Activated B cell treated with CpG ODN at 0.5 μM for 24 hours (primary cell): ENCODE measurements at regions of chr16 and their contacts with region 1.

Region 1: DNA sequence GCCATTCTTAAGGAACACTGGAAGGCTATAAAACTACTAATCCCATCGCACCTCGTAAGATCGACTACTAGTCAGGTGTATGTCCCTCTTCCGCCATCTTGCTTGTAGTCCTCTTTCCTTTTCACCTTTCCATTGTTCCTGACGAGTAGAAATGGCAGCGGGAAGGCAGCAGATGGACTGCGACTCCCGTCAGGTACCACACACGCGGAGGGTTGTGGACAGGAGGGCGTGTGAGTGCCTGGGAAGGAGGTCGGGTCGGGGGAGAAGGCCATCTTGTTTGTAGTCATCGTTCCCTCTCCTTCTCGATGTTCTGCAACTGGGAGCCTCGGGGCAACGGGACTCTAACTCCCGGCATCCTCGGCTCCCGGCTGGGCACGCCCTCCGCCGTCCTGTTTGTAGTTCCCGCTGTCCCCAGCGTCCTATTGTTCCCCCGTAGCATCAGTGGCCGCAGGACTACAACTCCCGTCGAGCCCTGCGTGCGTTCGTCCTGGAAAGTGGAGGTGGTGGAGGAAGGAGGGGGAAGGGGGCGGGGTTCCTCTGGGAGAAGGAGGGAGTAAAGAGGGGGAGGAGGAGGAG is 324 bp upstream of the FBXL19 start:
- DNase-seq: peak; percentile 86
- ATAC-seq: peak; percentile 68
- H3K4me3 Mint-ChIP-seq: peak overlapping the region; percentile 100
- H3K27ac Mint-ChIP-seq: peak overlapping the region; percentile 100
- H3K4me1 Mint-ChIP-seq: peaks cover 20% of the 10 kb centered on the region
- H3K27me3 Mint-ChIP-seq: no peaks in the 10 kb centered on the region
- CTCF ChIP-seq: no peak

Region 2: DNA sequence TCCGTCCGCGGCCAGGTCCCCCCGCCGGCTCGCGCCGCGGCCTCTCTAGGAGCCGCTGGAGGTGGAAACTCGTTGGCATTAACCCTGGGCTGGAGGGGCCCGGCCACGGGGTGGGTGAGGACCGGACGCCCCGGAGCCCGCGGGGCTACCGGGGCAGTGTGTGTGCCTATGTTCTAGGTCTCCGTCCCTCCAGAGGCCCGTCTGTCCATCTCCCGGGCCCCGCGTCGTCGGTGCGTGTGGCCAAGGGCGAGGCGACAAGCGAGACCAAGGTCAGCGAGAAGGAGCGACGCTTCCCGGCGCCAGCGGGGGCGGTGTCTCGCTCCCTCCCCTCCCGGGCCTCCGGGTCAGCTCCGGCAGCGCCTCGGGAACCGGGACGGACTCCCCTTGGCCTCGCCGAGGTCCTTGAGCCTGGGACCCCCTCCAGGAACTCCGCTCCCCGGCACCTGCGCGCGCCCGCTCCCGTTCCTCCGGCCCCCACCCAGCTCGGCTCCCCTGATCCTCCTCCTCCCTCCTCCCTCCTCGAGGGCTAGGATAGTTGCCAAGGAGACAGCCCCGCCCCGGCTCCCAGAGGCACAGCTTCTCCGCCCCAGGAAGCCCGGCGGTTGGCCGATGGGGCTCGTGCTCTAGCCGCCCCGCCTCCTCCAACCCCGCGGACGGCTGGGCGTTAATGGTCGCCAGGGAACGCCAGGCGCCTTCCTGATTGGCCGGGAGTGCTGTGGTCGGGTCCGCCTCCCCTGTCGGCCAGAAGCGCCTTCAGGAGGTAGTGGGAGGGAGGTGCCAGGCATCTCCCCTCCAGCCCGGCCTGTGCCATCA is 396.0 kb before region 1 on chr16:
- CTCF ChIA-PET with region 1: no interaction called
- POLR2A ChIA-PET with region 1: no interaction called
- intact Hi-C with region 1: loop called (anchors 5 kb)
- DNase-seq: peak; percentile 93
- ATAC-seq: peak; percentile 84
- H3K4me3 Mint-ChIP-seq: peak overlapping the region; percentile 89
- H3K27ac Mint-ChIP-seq: peak overlapping the region; percentile 99
- H3K4me1 Mint-ChIP-seq: peaks cover 21% of the 10 kb centered on the region
- H3K27me3 Mint-ChIP-seq: no peaks in the 10 kb centered on the region
- CTCF ChIP-seq: no peak

Region 3: GRCh38 chr16:30657866-30658730 is 264.9 kb before region 1 on chr16 and contains the start of gene FBRS:
- CTCF ChIA-PET with region 1: no interaction called
- POLR2A ChIA-PET with region 1: interaction called, 5 read pairs
- intact Hi-C with region 1: loop called (anchors 1 kb)
- DNase-seq: peak; percentile 99
- ATAC-seq: peak; percentile 73
- H3K4me3 Mint-ChIP-seq: peak within 1 kb of the TSS; percentile 98
- H3K27ac Mint-ChIP-seq: peak within 1 kb of the TSS; percentile 100
- H3K4me1 Mint-ChIP-seq: peaks cover 37% of the 10 kb centered on the region
- H3K27me3 Mint-ChIP-seq: no peaks in the 10 kb centered on the region
- CTCF ChIP-seq: no peak
- total RNA-seq, gene FBRS: 166 and 204 TPM in 2 replicates

Region 4: DNA sequence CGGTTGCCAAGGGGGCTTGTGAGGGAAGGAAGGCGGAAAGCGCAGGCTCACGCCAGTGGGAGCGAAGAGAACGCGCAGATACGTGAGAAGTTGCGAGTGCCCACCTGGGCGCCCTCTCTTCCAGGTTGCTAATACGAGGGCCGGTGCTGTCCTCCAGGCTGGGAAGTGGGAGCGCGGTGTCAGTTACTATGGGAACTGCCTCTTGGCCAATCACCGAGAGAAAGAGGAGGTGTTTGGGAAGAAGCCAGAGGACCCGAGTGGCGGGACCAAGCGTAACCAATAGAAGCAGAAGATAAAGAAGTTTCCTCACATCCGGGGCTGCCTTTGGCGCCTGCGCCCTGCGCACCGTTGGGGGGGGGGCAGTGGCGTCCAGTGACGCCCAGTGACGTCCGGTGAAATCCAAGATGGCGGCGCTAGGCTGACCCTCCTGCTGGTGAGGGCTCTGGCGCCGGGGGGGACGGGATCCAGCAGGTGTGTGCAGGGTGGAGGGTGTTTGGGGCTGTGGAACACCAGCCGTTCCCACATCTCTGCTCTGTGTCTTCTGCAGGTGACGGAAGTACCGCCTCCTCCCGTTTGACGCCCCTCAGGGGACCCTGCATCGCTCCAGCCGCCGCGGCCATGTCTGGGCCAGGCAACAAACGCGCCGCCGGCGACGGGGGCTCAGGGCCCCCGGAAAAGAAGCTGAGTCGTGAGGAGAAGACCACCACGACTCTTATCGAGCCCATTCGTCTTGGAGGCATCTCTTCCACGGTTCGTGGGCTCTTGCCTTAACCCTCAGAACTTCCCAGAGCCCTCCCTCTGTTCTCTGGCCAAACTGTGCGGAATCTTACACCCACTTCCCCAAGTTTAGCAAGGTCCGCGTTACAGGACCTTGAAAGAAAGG is 160.9 kb before region 1 on chr16 and contains the starts of genes CFAP119 and RNF40:
- CTCF ChIA-PET with region 1: no interaction called
- POLR2A ChIA-PET with region 1: no interaction called
- intact Hi-C with region 1: loop called (anchors 1 kb)
- DNase-seq: peak; percentile 94
- ATAC-seq: peak; percentile 89
- H3K4me3 Mint-ChIP-seq: peak within 1 kb of the TSS; percentile 93
- H3K27ac Mint-ChIP-seq: peak within 1 kb of the TSS; percentile 87
- H3K4me1 Mint-ChIP-seq: peaks cover 42% of the 10 kb centered on the region
- H3K27me3 Mint-ChIP-seq: no peaks in the 10 kb centered on the region
- CTCF ChIP-seq: no peak
- total RNA-seq, gene CFAP119: 6.2 and 8.8 TPM in 2 replicates
- total RNA-seq, gene RNF40: 99.6 and 117 TPM in 2 replicates

Region 5: GRCh38 chr16:30858829-30859423 is 64.1 kb before region 1 on chr16:
- CTCF ChIA-PET with region 1: no interaction called
- POLR2A ChIA-PET with region 1: no interaction called
- intact Hi-C with region 1: no loop called
- DNase-seq: no peak
- ATAC-seq: no peak
- H3K4me3 Mint-ChIP-seq: no peak overlapping the region
- H3K27ac Mint-ChIP-seq: no peak overlapping the region
- H3K4me1 Mint-ChIP-seq: no peaks in the 10 kb centered on the region
- H3K27me3 Mint-ChIP-seq: no peaks in the 10 kb centered on the region
- CTCF ChIP-seq: no peak

Region 6: GRCh38 chr16:30902029-30902972 is 20.7 kb before region 1 on chr16:
- CTCF ChIA-PET with region 1: interaction called, 14 read pairs
- POLR2A ChIA-PET with region 1: interaction called, 10 read pairs
- intact Hi-C with region 1: loop called (anchors 1 kb)
- DNase-seq: peak; percentile 77
- ATAC-seq: peak; percentile 78
- H3K4me3 Mint-ChIP-seq: peak overlapping the region; percentile 95
- H3K27ac Mint-ChIP-seq: peak overlapping the region; percentile 95
- H3K4me1 Mint-ChIP-seq: peaks cover 31% of the 10 kb centered on the region
- H3K27me3 Mint-ChIP-seq: no peaks in the 10 kb centered on the region
- CTCF ChIP-seq: no peak

Region 7: GRCh38 chr16:30977502-30977901 is 54.5 kb after region 1 on chr16:
- CTCF ChIA-PET with region 1: no interaction called
- POLR2A ChIA-PET with region 1: no interaction called
- intact Hi-C with region 1: no loop called
- DNase-seq: no peak
- ATAC-seq: no peak
- H3K4me3 Mint-ChIP-seq: no peak overlapping the region
- H3K27ac Mint-ChIP-seq: no peak overlapping the region
- H3K4me1 Mint-ChIP-seq: no peaks in the 10 kb centered on the region
- H3K27me3 Mint-ChIP-seq: no peaks in the 10 kb centered on the region
- CTCF ChIP-seq: no peak

Region 8: DNA sequence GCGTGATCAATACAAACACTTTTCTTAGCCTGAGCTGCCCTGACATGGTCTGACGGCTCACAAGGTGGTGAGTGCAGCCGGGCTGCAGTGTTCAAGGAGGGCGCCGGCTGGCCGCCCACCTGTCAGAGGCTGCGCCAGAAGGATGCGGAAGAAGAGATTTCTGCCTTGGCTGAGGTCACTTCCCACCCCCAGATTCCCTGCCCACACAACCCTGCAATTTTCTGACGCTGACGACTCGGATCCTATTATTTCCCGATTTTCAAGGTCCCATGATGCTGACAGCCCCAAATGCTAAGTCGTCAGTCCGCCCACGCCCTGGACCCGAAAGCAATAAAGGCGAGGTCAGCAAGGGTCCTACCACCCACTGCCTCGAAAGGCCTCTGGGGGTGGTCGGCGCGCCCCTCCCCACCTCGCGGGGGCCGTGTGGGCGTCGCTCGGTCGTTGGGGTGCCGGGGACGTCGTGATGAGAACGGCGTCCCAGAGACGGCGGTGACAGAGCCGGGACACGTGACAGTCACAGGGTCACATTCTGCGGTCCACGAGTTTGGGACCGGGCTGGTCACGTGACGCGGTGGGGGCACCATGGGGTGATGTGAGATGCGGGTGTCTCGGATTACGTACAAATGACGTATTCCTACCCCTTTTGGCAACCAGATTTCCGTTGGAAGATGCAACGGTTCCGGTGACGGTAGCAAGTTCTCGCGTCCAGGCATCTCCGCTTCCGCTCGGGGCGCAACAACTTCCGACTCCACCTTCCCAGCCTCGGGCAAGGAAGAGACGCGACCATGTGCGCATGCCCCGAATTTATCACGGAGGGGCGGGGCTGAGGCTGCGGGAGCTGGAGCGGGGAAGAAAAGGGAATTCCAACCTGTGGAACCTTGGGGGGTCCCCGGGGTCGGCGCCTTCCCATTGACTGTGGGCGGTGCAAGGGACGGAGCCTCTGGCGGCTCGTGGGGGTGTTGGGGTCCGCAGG is 110.0 kb after region 1 on chr16 and contains the start of gene STX4:
- CTCF ChIA-PET with region 1: no interaction called
- POLR2A ChIA-PET with region 1: no interaction called
- intact Hi-C with region 1: loop called (anchors 1 kb)
- DNase-seq: peak; percentile 95
- ATAC-seq: peak; percentile 78
- H3K4me3 Mint-ChIP-seq: peak within 1 kb of the TSS; percentile 97
- H3K27ac Mint-ChIP-seq: peak within 1 kb of the TSS; percentile 94
- H3K4me1 Mint-ChIP-seq: peaks cover 17% of the 10 kb centered on the region
- H3K27me3 Mint-ChIP-seq: no peaks in the 10 kb centered on the region
- CTCF ChIP-seq: no peak
- total RNA-seq, gene STX4: 106 and 107 TPM in 2 replicates

Region 9: GRCh38 chr16:31873556-31874365 is 950.7 kb after region 1 on chr16 and contains the start of gene ZNF267:
- CTCF ChIA-PET with region 1: no interaction called
- POLR2A ChIA-PET with region 1: no interaction called
- intact Hi-C with region 1: loop called (anchors 1 kb)
- DNase-seq: peak; percentile 79
- ATAC-seq: peak; percentile 69
- H3K4me3 Mint-ChIP-seq: peak within 1 kb of the TSS; percentile 83
- H3K27ac Mint-ChIP-seq: peak within 1 kb of the TSS; percentile 87
- H3K4me1 Mint-ChIP-seq: peaks cover 83% of the 10 kb centered on the region
- H3K27me3 Mint-ChIP-seq: no peaks in the 10 kb centered on the region
- CTCF ChIP-seq: no peak
- total RNA-seq, gene ZNF267: 93.5 and 99.0 TPM in 2 replicates